Activated T-helper 1 cell treated with anti-CD3 and anti-CD28 coated beads, Interleukin-12 subunit alpha, Interleukin-12 subunit beta, Interleukin-2, Interleukin-4 antibody, amounts not matched to agents 30 ng/mL and 10 ng/mL and 1 ng/mL, durations not matched to agents 14 hours and 24 hours and 36 hours (primary cell): ENCODE measurements at regions of chr6 and their contacts with region 1.

Region 1: DNA sequence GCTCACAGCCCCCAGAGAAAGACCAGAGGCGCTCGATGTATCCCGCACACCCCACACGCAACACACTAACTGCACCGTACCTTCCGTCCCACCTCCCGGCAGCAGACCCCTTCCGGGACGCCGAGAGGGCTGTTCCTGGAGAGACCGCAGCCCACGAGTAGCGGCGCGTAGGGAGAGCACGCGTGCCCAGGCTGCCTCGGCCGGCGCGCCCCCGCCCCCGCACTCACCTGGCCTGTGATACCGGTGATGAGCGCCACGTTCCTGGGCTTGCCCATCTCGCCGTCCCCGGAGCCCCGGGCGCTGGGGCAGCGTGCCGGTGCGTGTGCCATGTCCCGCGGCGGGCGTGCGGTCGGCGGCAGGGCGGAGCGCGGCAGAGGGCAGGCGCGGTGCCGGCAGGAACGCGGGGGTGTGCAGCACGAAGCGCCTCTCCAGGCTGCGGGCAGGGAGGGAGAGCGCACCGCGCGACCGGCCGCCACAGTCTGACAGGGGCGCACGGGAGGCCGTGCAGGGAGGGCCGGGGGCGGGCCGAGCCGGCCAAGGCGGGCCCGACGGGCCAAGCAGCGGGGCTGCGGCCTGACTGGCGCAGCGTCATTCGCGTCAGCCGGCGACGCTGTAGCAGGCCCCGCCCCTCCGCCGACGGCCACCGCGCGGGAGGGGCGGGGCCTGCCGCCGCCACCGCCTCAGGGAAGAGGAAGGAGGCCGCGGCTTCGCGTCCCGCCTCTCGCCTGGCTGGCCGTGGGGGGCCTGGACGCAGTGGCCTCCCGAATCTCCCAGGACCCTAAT is at the start of gene GMDS:
- DNase-seq: peak; percentile 82
- H3K4me3 Mint-ChIP-seq: peak within 1 kb of the TSS; percentile 92
- H3K27ac Mint-ChIP-seq: peak within 1 kb of the TSS; percentile 89
- H3K4me1 Mint-ChIP-seq: peaks cover 76% of the 10 kb centered on the region
- H3K27me3 Mint-ChIP-seq: no peaks in the 10 kb centered on the region
- total RNA-seq, gene GMDS: 44.5 and 53.4 TPM in 2 replicates

Region 2: GRCh38 chr6:2081155-2082138 is 163.8 kb before region 1 on chr6:
- intact Hi-C with region 1: loop called (anchors 1 kb)
- DNase-seq: peak; percentile 35
- H3K4me3 Mint-ChIP-seq: peak overlapping the region; percentile 3
- H3K27ac Mint-ChIP-seq: peak overlapping the region; percentile 71
- H3K4me1 Mint-ChIP-seq: peaks cover 51% of the 10 kb centered on the region
- H3K27me3 Mint-ChIP-seq: peaks cover 5% of the 10 kb centered on the region

Region 3: GRCh38 chr6:2127484-2127911 is 117.8 kb before region 1 on chr6:
- intact Hi-C with region 1: loop called (anchors 2 kb)
- DNase-seq: peak; percentile 14
- H3K4me3 Mint-ChIP-seq: peak overlapping the region; percentile 32
- H3K27ac Mint-ChIP-seq: peak overlapping the region; percentile 76
- H3K4me1 Mint-ChIP-seq: peaks cover 35% of the 10 kb centered on the region
- H3K27me3 Mint-ChIP-seq: no peaks in the 10 kb centered on the region

Region 4: DNA sequence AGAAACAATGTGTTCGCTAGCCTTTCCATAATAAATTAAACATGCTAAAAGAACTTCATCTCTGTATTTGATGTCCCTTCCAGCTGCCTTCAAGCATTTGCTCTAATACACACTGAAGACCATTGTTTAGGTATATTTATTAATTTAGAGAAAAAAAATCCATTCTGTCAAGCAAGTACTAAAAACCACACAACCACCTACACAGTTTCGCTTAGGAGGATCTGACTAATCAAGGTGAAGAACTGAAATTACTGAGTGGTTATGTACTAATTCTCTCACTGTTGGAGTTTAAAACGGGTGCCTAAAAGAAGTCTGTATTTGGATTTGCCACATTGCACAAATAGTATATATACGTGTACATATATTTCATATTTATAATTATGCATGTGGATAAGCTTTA is 58.8 kb before region 1 on chr6:
- intact Hi-C with region 1: loop called (anchors 2 kb)
- DNase-seq: no peak
- H3K4me3 Mint-ChIP-seq: no peak overlapping the region
- H3K27ac Mint-ChIP-seq: peak overlapping the region; percentile 65
- H3K4me1 Mint-ChIP-seq: peaks cover 20% of the 10 kb centered on the region
- H3K27me3 Mint-ChIP-seq: peaks cover 6% of the 10 kb centered on the region

Region 5: DNA sequence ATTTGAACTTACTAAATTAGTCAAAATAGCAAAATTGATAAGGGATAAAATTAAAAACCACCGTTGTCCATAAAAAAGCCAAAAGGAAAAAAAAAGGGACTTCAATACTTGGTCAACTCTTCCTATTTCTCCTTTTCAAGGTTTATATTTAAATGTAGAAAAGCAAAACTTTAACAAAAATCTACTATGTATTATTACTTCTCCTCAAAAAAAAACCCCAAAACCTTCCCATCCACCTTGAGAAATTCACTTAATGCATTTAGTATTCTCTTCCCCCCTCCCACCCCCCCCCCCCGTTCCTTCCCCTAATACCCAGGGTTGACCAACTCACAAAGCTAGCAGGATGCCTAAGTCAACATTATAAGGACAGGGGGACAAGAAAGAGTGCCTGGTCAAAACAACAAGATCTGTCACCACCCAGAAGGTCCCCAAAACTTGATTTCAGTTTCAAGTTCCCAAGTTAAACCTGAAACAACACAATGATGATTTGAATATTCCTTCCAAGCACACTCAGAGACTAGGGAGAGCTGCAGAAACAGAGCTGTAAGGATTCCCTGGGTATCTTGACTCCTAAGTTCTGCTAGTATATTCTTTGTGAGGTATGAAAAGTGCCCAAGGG is 14.5 kb before region 1 on chr6:
- intact Hi-C with region 1: loop called (anchors 1 kb)
- DNase-seq: no peak
- H3K4me3 Mint-ChIP-seq: peak overlapping the region; percentile 10
- H3K27ac Mint-ChIP-seq: peak overlapping the region; percentile 37
- H3K4me1 Mint-ChIP-seq: peaks cover 34% of the 10 kb centered on the region
- H3K27me3 Mint-ChIP-seq: no peaks in the 10 kb centered on the region

Region 6: DNA sequence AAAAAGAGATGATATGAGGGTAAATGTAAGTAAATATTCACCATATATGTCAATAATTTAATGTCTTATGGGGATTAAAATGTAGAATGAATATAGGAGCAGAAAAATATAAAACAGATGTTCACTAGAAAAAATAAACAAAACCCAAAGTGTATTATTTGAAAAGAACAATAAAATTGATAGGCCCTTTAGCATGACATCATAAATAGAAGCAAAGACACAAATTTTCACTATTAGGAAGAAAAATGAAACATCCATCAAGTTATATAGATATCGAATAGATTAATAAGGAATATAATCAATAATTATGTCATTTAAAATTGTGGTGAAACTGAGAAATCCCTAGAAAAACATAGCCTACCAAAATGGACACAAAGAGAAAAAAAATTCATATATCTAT is 40.2 kb after region 1 on chr6:
- intact Hi-C with region 1: no loop called
- DNase-seq: no peak
- H3K4me3 Mint-ChIP-seq: no peak overlapping the region
- H3K27ac Mint-ChIP-seq: no peak overlapping the region
- H3K4me1 Mint-ChIP-seq: no peaks in the 10 kb centered on the region
- H3K27me3 Mint-ChIP-seq: no peaks in the 10 kb centered on the region

Region 7: DNA sequence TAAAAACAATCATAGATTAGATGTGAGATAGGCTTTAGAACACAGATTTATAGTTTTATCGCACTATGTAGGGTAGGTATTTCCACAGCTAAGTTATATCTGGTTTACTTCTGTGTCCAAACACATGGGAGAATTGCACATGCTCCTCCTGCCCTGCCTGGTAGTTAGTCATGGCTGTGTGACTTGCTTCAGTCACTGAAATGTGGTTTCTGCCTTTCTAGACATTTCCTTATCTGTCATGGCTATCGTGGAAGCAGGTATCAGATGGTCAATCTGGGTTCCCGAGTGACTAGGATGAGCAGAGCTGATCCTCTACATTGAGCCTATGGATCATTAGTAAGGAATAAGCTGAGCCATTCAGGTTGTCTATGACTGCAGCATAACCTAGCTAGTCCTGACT is 117.9 kb after region 1 on chr6:
- intact Hi-C with region 1: no loop called
- DNase-seq: no peak
- H3K4me3 Mint-ChIP-seq: no peak overlapping the region
- H3K27ac Mint-ChIP-seq: no peak overlapping the region
- H3K4me1 Mint-ChIP-seq: no peaks in the 10 kb centered on the region
- H3K27me3 Mint-ChIP-seq: peaks cover 6% of the 10 kb centered on the region

Region 8: DNA sequence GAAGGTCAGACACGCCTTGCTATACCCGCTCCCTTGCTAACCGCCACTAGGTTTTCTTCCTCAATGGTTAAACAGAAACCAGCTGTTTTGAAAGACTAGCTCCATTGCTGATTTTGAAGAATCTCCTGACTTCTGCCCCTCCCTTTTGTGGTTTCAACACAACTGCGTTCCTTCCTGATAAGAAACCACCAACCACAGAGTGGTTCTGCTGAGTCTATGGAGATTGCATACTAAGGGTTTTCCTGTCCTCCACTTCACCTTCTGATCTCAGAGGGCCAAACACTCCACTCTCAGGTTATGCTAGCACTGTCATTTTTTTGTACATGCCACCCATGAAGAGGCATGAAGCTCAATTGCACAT is 297.6 kb after region 1 on chr6:
- intact Hi-C with region 1: loop called (anchors 5 kb)
- DNase-seq: peak; percentile 78
- H3K4me3 Mint-ChIP-seq: peak overlapping the region; percentile 41
- H3K27ac Mint-ChIP-seq: peak overlapping the region; percentile 74
- H3K4me1 Mint-ChIP-seq: peaks cover 39% of the 10 kb centered on the region
- H3K27me3 Mint-ChIP-seq: peaks cover 66% of the 10 kb centered on the region

Region 9: GRCh38 chr6:2841264-2842138 is 596.2 kb after region 1 on chr6 and contains the start of gene SERPINB1:
- intact Hi-C with region 1: loop called (anchors 10 kb)
- DNase-seq: peak; percentile 80
- H3K4me3 Mint-ChIP-seq: peak within 1 kb of the TSS; percentile 96
- H3K27ac Mint-ChIP-seq: peak within 1 kb of the TSS; percentile 93
- H3K4me1 Mint-ChIP-seq: peaks cover 62% of the 10 kb centered on the region
- H3K27me3 Mint-ChIP-seq: no peaks in the 10 kb centered on the region
- total RNA-seq, gene SERPINB1: 79.5 and 80.1 TPM in 2 replicates